K562 (cell line): ENCODE measurements at regions of chr10 and their contacts with region 1.

Region 1: GRCh38 chr10:25701652-25702051 is 232.4 kb upstream of the MYO3A start:
- DNase-seq: no peak
- ATAC-seq: no peak
- H3K4me3 ChIP-seq: no peak overlapping the region
- H3K27ac ChIP-seq: no peak overlapping the region
- H3K4me1 ChIP-seq: peaks cover 3 to 4% of the 10 kb centered on the region in 2 experiments; a peak in 2 of 5 replicates
- H3K27me3 ChIP-seq: peaks cover 0 to 9% of the 10 kb centered on the region in 2 experiments; a peak in 1 of 5 replicates
- CTCF ChIP-seq: no peak
- EP300 ChIP-seq: no peak
- POLR2A ChIP-seq: no peak
- RAD21 ChIP-seq: no peak

Region 2: GRCh38 chr10:25101461-25102146 is 600.0 kb before region 1 on chr10:
- CTCF ChIA-PET with region 1: no interaction called
- POLR2A ChIA-PET with region 1: no interaction called
- in situ Hi-C with region 1: no loop called
- intact Hi-C with region 1: loop called (anchors 10 kb)
- DNase-seq: no peak
- ATAC-seq: no peak; the same call in 2 of the 3 replicates
- H3K4me3 ChIP-seq: no peak overlapping the region
- H3K27ac ChIP-seq: no peak overlapping the region
- H3K4me1 ChIP-seq: peaks cover 4 to 22% of the 10 kb centered on the region in 2 experiments; a peak in 3 of 5 replicates
- H3K27me3 ChIP-seq: no peaks in the 10 kb centered on the region
- CTCF ChIP-seq: no peak
- EP300 ChIP-seq: no peak
- POLR2A ChIP-seq: no peak
- RAD21 ChIP-seq: no peak

Region 3: DNA sequence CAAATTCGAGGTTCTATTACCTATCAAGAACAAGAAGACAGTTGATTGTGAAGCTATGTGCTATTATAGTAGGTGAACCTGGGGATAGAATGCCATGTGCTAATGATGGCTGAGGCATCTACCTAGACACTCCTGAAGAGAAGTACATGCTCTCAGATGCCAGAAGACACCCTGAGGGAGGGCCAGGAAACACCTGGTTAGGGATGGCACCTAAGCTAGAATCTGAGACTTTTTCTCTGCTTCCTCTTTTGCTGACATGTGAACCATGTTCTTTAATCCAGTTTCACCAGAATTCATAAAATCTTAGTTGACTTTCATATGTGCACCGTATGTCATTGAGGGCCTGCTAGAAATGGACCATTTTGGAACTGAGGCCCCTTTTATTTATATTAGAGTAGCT is 284.0 kb before region 1 on chr10:
- CTCF ChIA-PET with region 1: no interaction called
- POLR2A ChIA-PET with region 1: no interaction called
- in situ Hi-C with region 1: no loop called
- intact Hi-C with region 1: no loop called
- DNase-seq: no peak
- ATAC-seq: no peak
- H3K4me3 ChIP-seq: no peak overlapping the region
- H3K27ac ChIP-seq: no peak overlapping the region
- H3K4me1 ChIP-seq: no peaks in the 10 kb centered on the region
- H3K27me3 ChIP-seq: no peaks in the 10 kb centered on the region
- CTCF ChIP-seq: no peak
- EP300 ChIP-seq: no peak
- POLR2A ChIP-seq: no peak
- RAD21 ChIP-seq: no peak

Region 4: DNA sequence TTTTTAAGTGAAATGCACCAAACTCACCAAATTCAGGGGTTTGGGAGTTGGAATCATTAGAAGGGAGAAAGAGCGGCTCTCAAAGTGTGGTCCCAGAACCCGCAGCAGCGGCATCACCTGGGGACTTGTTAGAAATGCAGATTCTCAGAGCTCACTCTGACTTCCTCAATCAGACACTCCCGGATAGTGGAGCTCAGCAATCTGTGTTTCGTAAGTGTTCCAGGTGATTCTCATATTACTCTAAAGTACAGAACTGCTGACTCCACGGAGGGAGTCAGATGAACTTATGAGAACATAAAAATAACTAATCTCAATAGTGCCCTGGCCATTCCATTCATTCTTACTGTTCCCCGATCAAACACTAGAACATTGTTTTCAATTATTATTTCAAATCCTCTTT is 126.3 kb before region 1 on chr10:
- CTCF ChIA-PET with region 1: no interaction called
- POLR2A ChIA-PET with region 1: no interaction called
- in situ Hi-C with region 1: no loop called
- intact Hi-C with region 1: no loop called
- DNase-seq: no peak
- ATAC-seq: no peak
- H3K4me3 ChIP-seq: no peak overlapping the region
- H3K27ac ChIP-seq: no peak overlapping the region
- H3K4me1 ChIP-seq: no peaks in the 10 kb centered on the region
- H3K27me3 ChIP-seq: no peaks in the 10 kb centered on the region
- CTCF ChIP-seq: no peak
- EP300 ChIP-seq: no peak
- POLR2A ChIP-seq: no peak
- RAD21 ChIP-seq: no peak

Region 5: DNA sequence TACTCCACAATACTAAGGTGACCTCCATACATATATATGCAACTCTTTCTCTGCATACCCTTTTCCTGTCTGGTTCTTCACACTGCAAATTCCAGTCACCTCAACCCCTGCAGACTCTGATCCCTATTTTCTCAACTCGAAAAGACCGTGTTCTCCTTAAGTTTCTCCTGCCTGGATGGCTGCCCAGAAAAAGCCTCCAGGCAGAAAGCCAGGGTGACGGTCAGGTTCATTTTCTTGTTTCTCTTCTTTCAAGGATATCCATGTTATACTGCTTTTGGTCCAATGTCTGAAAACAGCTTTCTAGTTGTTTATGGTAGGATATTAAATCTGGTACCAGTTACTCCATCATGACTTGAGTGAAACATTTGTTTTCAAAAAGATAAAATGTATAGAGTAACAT is 35.4 kb before region 1 on chr10:
- CTCF ChIA-PET with region 1: no interaction called
- POLR2A ChIA-PET with region 1: no interaction called
- in situ Hi-C with region 1: no loop called
- intact Hi-C with region 1: no loop called
- DNase-seq: no peak
- ATAC-seq: no peak
- H3K4me3 ChIP-seq: no peak overlapping the region
- H3K27ac ChIP-seq: no peak overlapping the region
- H3K4me1 ChIP-seq: no peaks in the 10 kb centered on the region
- H3K27me3 ChIP-seq: no peaks in the 10 kb centered on the region
- CTCF ChIP-seq: no peak
- EP300 ChIP-seq: no peak
- POLR2A ChIP-seq: no peak
- RAD21 ChIP-seq: no peak